ENCODE measurements at regions of chr7 and their contacts with region 1.

Region 1: DNA sequence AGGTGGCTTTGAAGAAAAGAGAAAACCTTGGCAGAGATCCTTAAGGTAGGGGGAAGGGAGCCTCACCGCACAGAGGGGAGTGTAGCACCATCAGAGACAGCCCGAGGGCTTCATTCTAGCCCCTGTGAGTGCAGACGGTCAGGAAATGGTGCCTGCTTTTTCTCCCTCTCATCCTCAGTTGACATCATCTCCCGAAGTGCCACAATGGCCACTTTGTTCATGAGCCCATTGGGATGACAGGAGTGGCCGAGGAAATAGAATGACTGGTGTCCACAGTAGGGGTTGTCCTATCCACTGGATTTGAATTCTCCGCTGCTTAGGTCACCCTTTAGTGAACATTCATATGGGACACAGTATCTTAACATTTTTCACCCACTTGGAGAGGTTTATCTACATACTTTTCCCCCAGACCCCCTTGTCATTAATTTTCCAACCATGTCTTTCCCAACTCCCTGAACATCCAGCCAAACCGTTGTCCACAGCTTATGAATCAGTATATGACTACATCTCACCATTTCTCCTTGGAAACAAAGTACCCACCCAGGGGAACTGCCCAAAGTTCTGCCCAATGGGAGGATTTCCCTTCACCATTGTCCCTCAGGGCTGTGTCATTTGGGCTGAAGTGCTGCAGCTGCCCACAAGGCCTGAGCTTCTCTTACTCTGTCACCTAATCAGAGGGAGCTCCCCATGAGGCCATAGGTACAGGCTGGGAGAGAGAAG is 108.8 kb downstream of the ADCY1 start:
- DNase-seq: no peak

Region 2: GRCh38 chr7:44885394-44886317 is 797.3 kb before region 1 on chr7 and contains the start of gene PURB:
- CTCF ChIA-PET with region 1: no interaction called
- POLR2A ChIA-PET with region 1: no interaction called
- DNase-seq: peak; percentile 94

Region 3: DNA sequence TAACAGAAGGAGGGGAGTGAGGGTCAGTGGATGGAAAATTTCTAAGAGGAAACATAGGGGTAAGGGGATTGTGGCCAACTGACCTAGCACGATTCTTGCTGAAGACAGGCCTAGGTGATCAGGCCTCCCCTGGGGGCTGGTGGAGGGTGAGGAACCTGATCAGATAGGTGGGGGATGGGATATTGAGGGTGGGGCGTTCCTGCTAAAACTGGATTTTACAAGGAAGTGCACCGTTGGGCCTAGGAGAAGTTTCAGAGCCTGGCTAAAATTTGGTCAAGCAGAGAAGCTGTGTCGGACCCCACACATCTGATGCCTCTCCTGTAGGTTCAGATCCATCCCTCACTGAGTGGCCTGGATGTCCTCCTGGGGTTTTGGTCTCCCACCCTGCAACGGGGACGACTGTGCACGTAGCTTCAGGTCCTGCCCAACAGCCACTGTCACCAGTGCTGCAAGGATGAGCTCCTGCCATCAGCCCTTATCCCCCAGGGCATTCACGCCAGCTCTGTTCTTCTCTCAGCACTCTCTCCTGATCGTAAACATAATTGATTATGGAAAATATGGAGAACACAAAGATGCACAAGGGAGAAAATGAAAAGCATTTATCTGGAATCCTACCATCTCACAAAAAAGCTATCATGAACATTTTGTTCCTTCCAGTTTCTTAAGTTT is 18.9 kb before region 1 on chr7:
- CTCF ChIA-PET with region 1: interaction called, 10 read pairs
- POLR2A ChIA-PET with region 1: no interaction called
- DNase-seq: no peak

Region 4: GRCh38 chr7:45709168-45710042 is 26.4 kb after region 1 on chr7:
- CTCF ChIA-PET with region 1: no interaction called
- POLR2A ChIA-PET with region 1: no interaction called
- DNase-seq: no peak

Measured in HEK293T (cell line).